ENCODE measurements at regions of chr12 and their contacts with region 1.

Region 1: GRCh38 chr12:54191550-54192022 is 2.8 kb upstream of the SMUG1 start:
- DNase-seq: peak; percentile 81
- CTCF ChIP-seq: peak; percentile 81

Region 2: DNA sequence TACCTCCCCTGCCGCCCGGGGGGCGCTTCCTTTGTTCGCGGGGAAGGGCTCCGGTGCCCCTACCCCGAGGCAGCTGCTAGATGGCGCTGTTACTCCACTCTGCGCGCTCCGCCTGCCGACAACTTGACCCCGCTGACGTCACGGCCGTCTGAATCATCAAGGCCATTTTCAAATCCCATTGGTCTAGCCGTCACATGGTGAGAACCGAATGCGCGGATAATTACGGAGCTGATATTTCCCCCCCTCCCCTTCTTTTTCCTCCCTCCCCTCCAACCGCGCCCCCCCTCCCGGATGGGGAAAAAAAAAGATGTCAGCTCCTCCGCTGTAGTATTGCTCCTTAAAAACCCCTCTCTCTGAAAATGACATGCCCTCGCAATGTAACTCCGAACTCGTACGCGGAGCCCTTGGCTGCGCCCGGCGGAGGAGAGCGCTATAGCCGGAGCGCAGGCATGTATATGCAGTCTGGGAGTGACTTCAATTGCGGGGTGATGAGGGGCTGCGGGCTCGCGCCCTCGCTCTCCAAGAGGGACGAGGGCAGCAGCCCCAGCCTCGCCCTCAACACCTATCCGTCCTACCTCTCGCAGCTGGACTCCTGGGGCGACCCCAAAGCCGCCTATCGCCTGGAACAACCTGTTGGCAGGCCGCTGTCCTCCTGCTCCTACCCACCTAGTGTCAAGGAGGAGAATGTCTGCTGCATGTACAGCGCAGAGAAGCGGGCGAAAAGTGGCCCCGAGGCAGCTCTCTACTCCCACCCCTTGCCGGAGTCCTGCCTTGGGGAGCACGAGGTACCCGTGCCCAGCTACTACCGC is 206.5 kb before region 1 on chr12 and contains the start of gene HOXC10:
- CTCF ChIA-PET with region 1: interaction called, 12 read pairs
- POLR2A ChIA-PET with region 1: no interaction called
- DNase-seq: peak; percentile 87
- CTCF ChIP-seq: peak; percentile 71

Region 3: GRCh38 chr12:53995378-53996239 is 196.0 kb before region 1 on chr12:
- CTCF ChIA-PET with region 1: interaction called, 14 read pairs
- POLR2A ChIA-PET with region 1: no interaction called
- DNase-seq: no peak
- CTCF ChIP-seq: no peak

Region 4: GRCh38 chr12:54005853-54006686 is 185.5 kb before region 1 on chr12:
- CTCF ChIA-PET with region 1: interaction called, 139 read pairs
- POLR2A ChIA-PET with region 1: interaction called, 9 read pairs
- DNase-seq: peak; percentile 82
- CTCF ChIP-seq: peak; percentile 94

Region 5: GRCh38 chr12:54012631-54013409 is 178.8 kb before region 1 on chr12:
- CTCF ChIA-PET with region 1: interaction called, 139 read pairs
- POLR2A ChIA-PET with region 1: interaction called, 9 read pairs
- DNase-seq: no peak
- CTCF ChIP-seq: no peak

Region 6: GRCh38 chr12:54017878-54018467 is 173.6 kb before region 1 on chr12:
- CTCF ChIA-PET with region 1: interaction called, 11 read pairs
- POLR2A ChIA-PET with region 1: no interaction called
- DNase-seq: peak; percentile 94
- CTCF ChIP-seq: no peak

Region 7: DNA sequence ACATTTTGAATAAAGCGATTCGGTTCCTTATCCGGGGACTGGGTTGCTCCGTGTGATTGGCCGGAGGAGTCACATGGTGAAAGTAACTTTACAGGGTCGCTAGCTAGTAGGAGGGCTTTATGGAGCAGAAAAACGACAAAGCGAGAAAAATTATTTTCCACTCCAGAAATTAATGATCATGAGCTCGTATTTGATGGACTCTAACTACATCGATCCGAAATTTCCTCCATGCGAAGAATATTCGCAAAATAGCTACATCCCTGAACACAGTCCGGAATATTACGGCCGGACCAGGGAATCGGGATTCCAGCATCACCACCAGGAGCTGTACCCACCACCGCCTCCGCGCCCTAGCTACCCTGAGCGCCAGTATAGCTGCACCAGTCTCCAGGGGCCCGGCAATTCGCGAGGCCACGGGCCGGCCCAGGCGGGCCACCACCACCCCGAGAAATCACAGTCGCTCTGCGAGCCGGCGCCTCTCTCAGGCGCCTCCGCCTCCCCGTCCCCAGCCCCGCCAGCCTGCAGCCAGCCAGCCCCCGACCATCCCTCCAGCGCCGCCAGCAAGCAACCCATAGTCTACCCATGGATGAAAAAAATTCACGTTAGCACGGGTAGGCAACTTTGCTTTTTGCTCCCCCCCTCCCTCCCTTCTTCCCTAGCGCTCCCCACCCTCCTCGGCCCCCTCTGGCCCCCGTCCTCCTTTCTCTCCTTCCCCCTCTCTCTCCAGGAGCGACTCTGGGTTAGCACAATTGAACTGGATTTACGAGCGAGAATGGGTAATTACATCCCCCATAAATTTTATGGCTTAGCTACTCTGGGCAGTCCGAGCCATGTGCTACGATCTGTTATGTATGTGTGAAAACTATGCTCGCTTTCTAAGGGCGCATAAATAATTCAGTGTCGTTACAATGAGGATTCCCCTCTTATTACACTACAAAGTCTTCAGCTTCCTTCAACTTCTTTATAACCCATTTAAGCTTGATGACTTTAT is 137.5 kb before region 1 on chr12 and contains the start of gene HOXC4:
- CTCF ChIA-PET with region 1: interaction called, 10 read pairs
- POLR2A ChIA-PET with region 1: no interaction called
- DNase-seq: peak; percentile 78
- CTCF ChIP-seq: no peak

Region 8: DNA sequence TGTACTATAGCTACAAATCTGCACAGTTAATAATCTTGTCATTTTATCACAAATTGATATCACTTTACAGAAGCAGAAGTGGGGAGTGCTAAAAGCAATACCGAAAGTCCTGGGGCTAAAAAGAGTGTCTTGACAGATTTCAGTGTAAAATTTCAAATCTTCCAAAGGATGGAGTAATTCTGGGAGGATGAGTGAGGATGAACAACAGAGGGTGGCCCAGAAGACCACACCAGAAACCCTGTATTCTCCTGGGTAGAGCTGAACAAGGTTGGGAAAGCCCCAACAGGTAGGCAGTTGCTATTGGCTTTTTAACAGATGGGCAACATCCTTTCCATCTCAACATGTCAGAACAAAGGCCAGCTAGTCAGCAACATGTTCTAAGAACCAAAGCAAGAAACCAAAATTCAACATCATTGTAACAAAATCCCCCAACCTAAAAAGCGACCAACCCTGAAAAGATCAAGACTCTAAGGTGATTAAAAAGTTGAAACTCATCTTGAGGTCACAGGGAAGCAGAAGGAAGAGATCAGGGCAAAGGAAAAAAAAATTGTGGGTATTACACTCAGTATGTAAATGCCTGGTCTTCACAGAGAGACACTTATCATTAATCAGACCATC is 49.5 kb after region 1 on chr12:
- CTCF ChIA-PET with region 1: no interaction called
- POLR2A ChIA-PET with region 1: no interaction called
- DNase-seq: no peak
- CTCF ChIP-seq: no peak